ENCODE measurements at regions of chr6 and their contacts with region 1.

Region 1: DNA sequence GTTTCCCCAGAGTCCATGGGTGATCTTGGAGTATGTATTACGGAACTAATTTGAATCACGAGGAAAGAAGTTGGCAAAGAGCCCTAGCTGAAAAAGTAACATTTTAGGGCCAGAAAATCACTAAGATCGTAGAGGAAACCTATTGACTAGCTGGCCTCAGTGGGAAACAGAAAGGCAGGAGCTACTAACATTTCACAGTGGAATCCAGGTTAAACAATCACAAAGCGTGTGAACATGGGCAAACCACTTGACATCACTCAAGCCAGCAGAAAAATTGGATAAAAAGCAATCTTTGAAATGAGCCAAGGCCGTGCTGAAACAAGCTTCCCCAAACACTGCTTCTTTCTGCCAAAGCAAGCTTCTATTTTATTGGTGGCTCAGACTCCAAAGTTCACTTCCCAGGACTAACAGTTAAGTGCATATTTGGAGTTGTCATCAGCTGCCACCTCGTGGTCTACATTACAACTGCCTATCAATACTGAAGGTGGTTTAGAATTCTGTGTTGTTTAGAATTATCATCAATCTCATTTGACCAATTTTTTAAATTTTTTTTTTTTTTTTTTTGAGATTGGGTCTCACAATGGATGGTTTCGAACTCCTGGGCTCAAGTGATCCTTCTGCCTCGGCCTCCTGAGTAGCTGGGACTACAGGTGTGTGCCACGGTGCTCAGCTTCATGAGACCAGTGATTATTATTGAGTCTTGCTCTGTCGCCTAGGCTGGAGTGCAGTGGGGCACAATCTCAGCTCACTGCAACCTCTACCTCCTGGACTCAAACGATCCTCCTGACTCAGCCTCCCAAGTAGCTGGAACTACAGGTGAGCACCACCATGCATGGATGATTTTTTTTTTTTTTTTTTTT is 10.6 kb downstream of the RPS10 start:
- DNase-seq: no peak

Region 2: DNA sequence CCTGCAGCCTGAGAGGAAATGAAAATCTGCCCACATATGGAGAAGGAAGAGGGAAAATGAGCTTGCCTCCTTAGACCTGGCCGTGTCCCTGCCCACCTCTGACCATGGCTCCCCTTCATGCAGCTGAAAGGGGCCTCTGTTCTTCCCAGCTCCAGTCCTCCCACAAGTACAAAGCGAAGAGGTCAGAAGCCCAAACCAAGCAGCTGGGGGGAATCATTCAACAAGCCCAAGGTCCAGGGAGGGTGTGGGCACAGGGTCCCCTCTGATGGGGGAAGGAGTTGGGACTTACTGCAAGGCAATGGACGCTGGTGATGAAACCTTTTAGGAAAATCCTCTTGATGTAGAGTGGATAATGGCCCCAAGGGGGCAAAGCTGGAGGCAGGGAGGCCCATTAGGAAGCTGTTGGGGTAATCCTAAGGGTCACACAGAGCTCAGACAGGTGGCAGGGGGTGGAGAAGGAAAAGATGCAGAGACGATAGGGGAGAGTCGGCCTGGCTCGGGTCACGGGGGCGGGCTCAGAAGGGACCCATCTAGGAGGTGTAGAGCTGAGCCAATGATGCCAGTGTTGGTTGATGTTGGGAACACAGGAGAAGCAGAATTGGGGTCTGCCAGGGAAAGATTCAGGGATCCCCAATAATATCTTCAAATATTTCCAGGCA is 253.2 kb before region 1 on chr6:
- intact Hi-C with region 1: loop called (anchors 10 kb)
- DNase-seq: peak; percentile 26

Region 3: DNA sequence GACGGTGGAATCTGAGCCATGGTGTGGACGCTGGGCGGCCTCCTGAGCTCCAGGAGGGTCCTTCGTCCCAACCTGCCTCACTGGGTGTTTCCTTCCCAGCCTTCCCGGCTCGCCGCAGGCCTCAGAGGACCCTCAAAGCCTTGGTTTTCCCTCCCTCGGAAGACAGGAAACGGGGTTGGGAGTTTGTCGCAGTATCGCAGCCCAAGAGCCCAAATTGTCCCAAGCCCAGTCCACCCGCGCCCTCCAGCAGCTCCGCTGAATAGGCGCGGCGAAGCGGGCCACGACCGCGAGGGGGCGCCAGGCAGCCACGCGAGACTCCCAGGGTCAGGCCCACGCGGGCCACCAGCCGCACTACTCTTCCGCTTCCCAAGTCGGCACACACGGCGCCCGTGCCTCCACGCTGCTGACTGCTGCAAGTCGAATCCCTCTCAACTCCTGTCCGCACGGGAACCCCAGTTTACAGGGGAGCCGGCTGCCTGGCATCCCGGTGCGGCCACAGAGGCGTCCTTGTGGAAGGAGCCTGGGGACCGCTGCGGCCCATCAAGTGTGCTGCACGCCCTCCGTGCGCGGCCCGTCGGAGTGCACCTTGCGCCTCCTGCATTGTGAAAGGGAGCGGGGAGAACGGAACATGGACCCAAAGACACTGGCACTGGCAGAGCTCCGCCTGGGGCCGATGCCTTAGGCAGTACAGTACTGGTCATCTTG is 219.0 kb before region 1 on chr6:
- intact Hi-C with region 1: loop called (anchors 2 kb)
- DNase-seq: peak; percentile 95

Region 4: GRCh38 chr6:34248727-34249551 is 166.3 kb before region 1 on chr6 and contains the start of gene SMIM29:
- intact Hi-C with region 1: loop called (anchors 2 kb)
- DNase-seq: peak; percentile 99
- total RNA-seq, gene SMIM29: 27.1 TPM